ENCODE measurements at regions of chr7 and their contacts with region 1.

Region 1: GRCh38 chr7:38257350-38257677 is 16.1 kb downstream of the TARP start:
- DNase-seq: no peak
- ATAC-seq: peak; percentile 46
- H3K4me3 ChIP-seq: no peak overlapping the region
- H3K4me3 Mint-ChIP-seq: no peak overlapping the region
- H3K27ac ChIP-seq: no peak overlapping the region
- H3K27ac Mint-ChIP-seq: peak overlapping the region in 1 of 9 donors; percentile 17
- H3K4me1 ChIP-seq: no peaks in the 10 kb centered on the region
- H3K4me1 Mint-ChIP-seq: peaks cover 0 to 14% (median 4%) of the 10 kb centered on the region in 7 donors
- H3K27me3 ChIP-seq: no peaks in the 10 kb centered on the region
- H3K27me3 Mint-ChIP-seq: no peaks in the 10 kb centered on the region

Region 2: GRCh38 chr7:38274486-38274885 is 17.2 kb after region 1 on chr7:
- CTCF ChIA-PET with region 1: no interaction called
- POLR2A ChIA-PET with region 1: no interaction called
- intact Hi-C with region 1: loop called in 1 of 2 experiments (anchors 2 kb)
- DNase-seq: no peak
- ATAC-seq: peak; percentile 38
- H3K4me3 ChIP-seq: no peak overlapping the region
- H3K4me3 Mint-ChIP-seq: peak overlapping the region in 1 of 10 donors; percentile 55
- H3K27ac ChIP-seq: no peak overlapping the region
- H3K27ac Mint-ChIP-seq: no peak overlapping the region
- H3K4me1 ChIP-seq: no peaks in the 10 kb centered on the region
- H3K4me1 Mint-ChIP-seq: no peaks in the 10 kb centered on the region
- H3K27me3 ChIP-seq: no peaks in the 10 kb centered on the region
- H3K27me3 Mint-ChIP-seq: no peaks in the 10 kb centered on the region

Measured in naive thymus-derived CD4-positive, alpha-beta T cell (primary cell).